ENCODE measurements at regions of chr4 and their contacts with region 1.

Region 1: GRCh38 chr4:56435306-56435926 is at the start of gene PPAT:
- DNase-seq: peak; percentile 98
- H3K4me3 ChIP-seq: peak within 1 kb of the TSS; percentile 98
- H3K27ac ChIP-seq: peak within 1 kb of the TSS; percentile 76
- H3K4me1 ChIP-seq: peaks cover 37% of the 10 kb centered on the region
- CTCF ChIP-seq: no peak
- total RNA-seq, gene PPAT: 35.8 and 47.2 TPM in 2 replicates

Region 2: DNA sequence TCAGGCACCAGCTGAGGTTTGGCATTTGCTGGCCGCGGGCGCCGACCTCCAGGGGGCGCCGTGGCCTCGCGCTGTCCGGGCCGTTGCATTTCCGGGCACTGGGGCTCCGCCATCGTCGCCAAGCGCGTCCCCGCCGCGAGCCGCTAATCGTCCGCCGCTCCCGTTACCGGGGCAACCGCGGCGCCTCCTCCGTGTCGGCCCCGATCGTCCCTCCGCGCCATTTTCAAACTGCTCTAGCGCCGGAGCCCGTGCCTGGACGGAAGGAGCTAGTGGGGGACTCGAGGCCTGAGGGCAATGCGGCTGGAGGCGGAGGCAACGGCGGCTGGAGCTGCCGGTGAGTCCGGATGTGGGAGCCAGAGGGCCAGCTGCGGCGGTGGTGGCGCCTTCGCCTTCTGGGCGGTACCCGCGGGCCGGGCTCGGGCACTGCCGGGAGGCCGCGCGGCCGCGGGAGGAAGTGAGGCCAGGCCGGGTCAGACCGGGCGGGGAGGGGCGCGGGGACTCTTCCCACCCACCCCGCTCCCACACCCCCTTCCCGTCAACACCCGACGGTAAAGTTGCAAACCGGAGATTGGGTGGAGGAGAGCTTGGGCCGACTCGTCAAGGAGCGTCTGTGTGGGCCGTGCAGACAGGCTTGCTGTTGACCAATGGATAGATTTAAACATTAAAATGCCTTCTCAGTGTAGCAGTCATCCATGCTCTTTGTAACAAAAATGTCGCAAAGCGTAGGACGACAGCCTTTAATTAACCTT is 486.5 kb before region 1 on chr4 and contains the start of gene CEP135:
- CTCF ChIA-PET with region 1: interaction called, 3 read pairs
- POLR2A ChIA-PET with region 1: interaction called, 6 read pairs
- intact Hi-C with region 1: loop called (anchors 2 kb)
- DNase-seq: peak; percentile 95
- H3K4me3 ChIP-seq: peak within 1 kb of the TSS; percentile 82
- H3K27ac ChIP-seq: peak within 1 kb of the TSS; percentile 95
- H3K4me1 ChIP-seq: peaks cover 53% of the 10 kb centered on the region
- CTCF ChIP-seq: peak; percentile 87
- total RNA-seq, gene CEP135: 21.6 and 32.4 TPM in 2 replicates

Region 3: GRCh38 chr4:56387023-56388001 is 48.1 kb before region 1 on chr4 and contains the start of gene AASDH:
- CTCF ChIA-PET with region 1: interaction called, 6 read pairs
- POLR2A ChIA-PET with region 1: interaction called, 31 read pairs
- intact Hi-C with region 1: loop called (anchors 1 kb)
- DNase-seq: peak; percentile 95
- H3K4me3 ChIP-seq: peak within 1 kb of the TSS; percentile 77
- H3K27ac ChIP-seq: peak within 1 kb of the TSS; percentile 85
- H3K4me1 ChIP-seq: peaks cover 22% of the 10 kb centered on the region
- CTCF ChIP-seq: no peak
- total RNA-seq, gene AASDH: 10.4 TPM in 2 replicates

Region 4: DNA sequence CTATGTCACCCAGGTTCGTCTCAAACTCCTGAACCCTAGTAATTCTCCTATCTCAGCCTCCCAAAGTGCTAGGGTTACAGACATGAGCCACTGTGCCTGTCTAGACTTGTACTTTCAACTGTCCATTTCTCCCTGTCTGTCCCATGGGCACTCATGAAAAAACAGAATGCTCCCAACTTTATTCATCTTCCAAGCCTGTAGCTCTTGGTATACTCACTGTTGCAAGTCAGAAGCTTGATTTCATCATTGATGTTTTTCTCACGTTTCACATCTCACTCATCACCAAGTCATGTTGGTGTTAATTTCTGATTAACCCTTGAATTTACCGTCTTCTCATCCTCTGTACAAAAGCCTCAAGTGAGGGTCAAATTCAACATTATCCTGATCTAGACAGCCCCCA is 24.7 kb after region 1 on chr4:
- CTCF ChIA-PET with region 1: no interaction called
- POLR2A ChIA-PET with region 1: interaction called, 26 read pairs
- intact Hi-C with region 1: no loop called
- DNase-seq: no peak
- H3K4me3 ChIP-seq: no peak overlapping the region
- H3K27ac ChIP-seq: no peak overlapping the region
- H3K4me1 ChIP-seq: peaks cover 10% of the 10 kb centered on the region
- CTCF ChIP-seq: no peak

Region 5: DNA sequence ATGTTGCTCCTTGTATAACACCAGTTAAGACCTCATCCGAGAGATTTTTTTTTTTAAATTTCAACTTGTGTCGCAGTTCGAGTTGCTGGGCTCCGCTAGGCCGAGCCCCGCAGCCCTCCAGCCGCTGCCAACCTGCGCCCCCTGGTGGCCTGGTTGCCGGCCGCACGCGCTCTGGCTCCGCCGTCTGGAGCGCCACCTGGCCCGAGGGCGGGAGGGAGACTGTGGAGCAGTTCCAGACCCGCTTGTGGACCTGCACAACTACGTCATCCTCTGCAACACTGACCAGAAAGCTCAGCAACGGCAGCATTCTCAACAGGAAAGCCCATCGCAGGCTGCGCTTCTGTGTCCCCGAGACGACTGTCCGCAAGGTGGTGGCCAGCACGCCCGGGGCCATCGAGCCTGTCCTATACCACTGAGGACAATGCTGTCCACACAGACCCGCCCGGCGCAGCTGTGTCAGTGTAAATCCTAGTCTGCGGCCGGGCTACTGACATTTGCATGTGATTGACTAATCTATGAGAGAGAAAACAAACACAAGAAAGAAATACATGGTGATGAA is 109.2 kb after region 1 on chr4:
- CTCF ChIA-PET with region 1: no interaction called
- POLR2A ChIA-PET with region 1: interaction called, 4 read pairs
- intact Hi-C with region 1: loop called (anchors 2 kb)
- DNase-seq: peak; percentile 68
- H3K4me3 ChIP-seq: peak overlapping the region; percentile 56
- H3K27ac ChIP-seq: no peak overlapping the region
- H3K4me1 ChIP-seq: peaks cover 4% of the 10 kb centered on the region
- CTCF ChIP-seq: peak; percentile 95

Region 6: DNA sequence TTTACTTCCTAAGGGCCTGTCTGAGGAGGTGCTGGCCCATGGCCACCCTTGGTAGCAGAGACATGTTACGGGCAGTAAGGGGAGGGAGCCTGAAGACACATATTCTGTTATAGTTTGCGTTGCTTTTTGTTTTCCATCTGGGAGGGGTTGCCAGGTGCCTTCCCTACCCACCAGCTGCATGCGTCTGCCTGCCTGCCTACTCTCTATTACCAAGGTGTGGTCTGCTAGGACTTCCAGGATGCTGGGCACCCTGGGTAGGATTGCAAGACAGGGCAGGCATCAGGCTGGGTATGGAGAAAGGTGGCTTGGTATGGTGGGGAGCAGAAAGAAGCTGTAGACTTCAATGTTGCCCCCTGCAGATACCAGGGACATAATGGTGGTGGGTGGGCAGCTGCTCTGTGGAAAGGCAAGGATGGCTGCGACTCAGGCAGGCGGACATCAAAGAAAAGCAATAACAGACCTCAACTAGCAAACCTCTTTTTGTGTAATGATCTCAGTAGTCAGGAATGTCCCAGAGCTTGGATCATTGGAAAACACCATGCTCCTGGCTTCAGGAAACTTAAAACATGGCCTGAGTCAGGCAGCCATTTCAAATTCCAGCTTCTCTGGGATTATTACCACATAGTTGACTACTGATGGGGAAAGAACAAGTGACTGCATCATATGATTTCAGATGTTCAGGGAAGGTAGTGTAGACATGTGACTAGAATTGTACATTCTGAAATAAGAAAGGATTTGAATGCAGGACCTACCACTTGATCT is 177.9 kb after region 1 on chr4:
- CTCF ChIA-PET with region 1: no interaction called
- POLR2A ChIA-PET with region 1: no interaction called
- intact Hi-C with region 1: no loop called
- DNase-seq: no peak
- H3K4me3 ChIP-seq: no peak overlapping the region
- H3K27ac ChIP-seq: no peak overlapping the region
- H3K4me1 ChIP-seq: no peaks in the 10 kb centered on the region
- CTCF ChIP-seq: no peak

Region 7: GRCh38 chr4:56977321-56978012 is 542.1 kb after region 1 on chr4 and contains the start of gene NOA1:
- CTCF ChIA-PET with region 1: interaction called, 3 read pairs
- POLR2A ChIA-PET with region 1: interaction called, 12 read pairs
- intact Hi-C with region 1: loop called (anchors 5 kb)
- DNase-seq: peak; percentile 99
- H3K4me3 ChIP-seq: peak within 1 kb of the TSS; percentile 98
- H3K27ac ChIP-seq: peak within 1 kb of the TSS; percentile 87
- H3K4me1 ChIP-seq: peaks cover 33% of the 10 kb centered on the region
- CTCF ChIP-seq: no peak
- total RNA-seq, gene NOA1: 20.2 TPM in 2 replicates